Endothelial cell of umbilical vein (primary cell): ENCODE measurements at regions of chr14 and their contacts with region 1.

Region 1: GRCh38 chr14:22986508-22987054 is 4.2 kb upstream of the AJUBA start:
- DNase-seq: peak; percentile 86
- H3K4me3 ChIP-seq: no peak overlapping the region
- H3K27ac ChIP-seq: no peak overlapping the region
- H3K4me1 ChIP-seq: peaks cover 6% of the 10 kb centered on the region
- H3K27me3 ChIP-seq: no peaks in the 10 kb centered on the region
- CTCF ChIP-seq: peak; percentile 78 to 82
- POLR2A ChIP-seq: no peak

Region 2: GRCh38 chr14:22112004-22112403 is 874.6 kb before region 1 on chr14:
- CTCF ChIA-PET with region 1: no interaction called
- POLR2A ChIA-PET with region 1: no interaction called
- dilution Hi-C with region 1: no loop called
- intact Hi-C with region 1: no loop called
- DNase-seq: peak; percentile 25
- H3K4me3 ChIP-seq: no peak overlapping the region
- H3K27ac ChIP-seq: no peak overlapping the region
- H3K4me1 ChIP-seq: no peaks in the 10 kb centered on the region
- H3K27me3 ChIP-seq: peaks cover 5 to 19% of the 10 kb centered on the region in 2 experiments
- CTCF ChIP-seq: peak; percentile 48 to 64
- POLR2A ChIP-seq: no peak

Region 3: GRCh38 chr14:22491683-22492621 is 494.6 kb before region 1 on chr14:
- CTCF ChIA-PET with region 1: no interaction called
- POLR2A ChIA-PET with region 1: no interaction called
- dilution Hi-C with region 1: no loop called
- intact Hi-C with region 1: no loop called
- DNase-seq: no peak
- H3K4me3 ChIP-seq: no peak overlapping the region
- H3K27ac ChIP-seq: no peak overlapping the region
- H3K4me1 ChIP-seq: no peaks in the 10 kb centered on the region
- H3K27me3 ChIP-seq: peaks cover 35 to 66% of the 10 kb centered on the region in 2 experiments
- CTCF ChIP-seq: no peak
- POLR2A ChIP-seq: no peak

Region 4: DNA sequence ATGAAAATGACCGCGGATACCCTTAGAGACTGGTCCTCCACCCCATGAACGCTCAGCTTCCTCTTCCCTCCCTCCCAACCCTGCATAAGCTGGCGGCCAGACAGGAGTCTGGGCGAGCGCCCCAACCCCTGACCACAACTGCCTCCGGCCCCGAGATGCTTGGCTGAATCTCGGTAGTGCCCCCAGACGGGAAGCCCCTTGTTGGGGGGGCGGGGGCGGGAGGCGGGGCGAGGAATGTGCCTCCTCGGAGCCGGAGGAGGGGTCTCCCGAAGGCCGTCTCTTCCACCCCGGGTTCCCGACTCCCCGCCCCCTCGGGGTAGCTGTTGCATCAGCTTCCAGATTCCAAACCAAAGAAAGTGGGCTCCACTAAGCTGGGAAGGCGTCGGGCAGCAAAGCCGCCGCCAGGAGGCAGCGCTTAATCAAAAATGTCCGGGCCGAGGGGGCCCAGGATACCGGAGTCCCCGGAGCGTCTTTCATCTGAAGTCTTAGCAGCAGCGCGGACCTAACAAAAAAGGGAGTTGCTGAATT is 163.9 kb before region 1 on chr14:
- CTCF ChIA-PET with region 1: interaction called, 12 read pairs
- POLR2A ChIA-PET with region 1: interaction called, 3 read pairs
- dilution Hi-C with region 1: no loop called
- intact Hi-C with region 1: loop called (anchors 1 kb)
- DNase-seq: peak; percentile 91
- H3K4me3 ChIP-seq: peak overlapping the region; percentile 14 to 57 (median 32)
- H3K27ac ChIP-seq: peak overlapping the region; percentile 68
- H3K4me1 ChIP-seq: peaks cover 47% of the 10 kb centered on the region
- H3K27me3 ChIP-seq: no peaks in the 10 kb centered on the region
- CTCF ChIP-seq: peak; percentile 86 to 88
- POLR2A ChIP-seq: no peak

Region 5: DNA sequence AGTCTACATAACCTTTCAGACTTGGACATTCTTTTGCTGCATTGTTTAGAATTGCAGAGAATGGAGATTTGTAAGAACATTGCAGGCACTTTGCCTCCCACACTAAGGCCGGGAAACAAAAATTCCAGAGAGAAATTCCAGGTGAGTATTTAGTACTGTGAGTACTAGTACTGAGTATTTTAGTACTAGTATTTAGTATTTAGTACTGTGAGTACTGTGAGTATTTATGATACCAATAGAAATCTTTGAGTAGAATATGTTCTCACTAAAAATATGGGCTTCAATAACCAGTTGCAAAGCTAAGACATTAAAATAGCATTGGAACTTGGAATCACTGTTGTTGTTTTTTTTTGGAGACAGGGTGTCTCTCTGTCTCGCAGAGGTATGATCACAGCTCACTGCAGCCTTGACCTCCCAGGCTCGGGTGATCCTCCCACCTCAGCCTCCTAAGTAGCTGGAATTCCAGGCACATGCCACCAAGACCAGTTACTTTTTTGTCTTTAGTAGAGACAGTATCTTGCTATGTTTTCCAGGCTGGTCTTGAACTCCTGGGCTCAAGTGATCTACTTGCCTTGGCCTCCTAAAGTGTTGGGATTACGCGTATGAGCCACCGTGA is 24.4 kb before region 1 on chr14:
- CTCF ChIA-PET with region 1: interaction called, 20 read pairs
- POLR2A ChIA-PET with region 1: interaction called, 3 read pairs
- dilution Hi-C with region 1: no loop called
- intact Hi-C with region 1: no loop called
- DNase-seq: no peak
- H3K4me3 ChIP-seq: no peak overlapping the region
- H3K27ac ChIP-seq: no peak overlapping the region
- H3K4me1 ChIP-seq: peaks cover 3% of the 10 kb centered on the region
- H3K27me3 ChIP-seq: no peaks in the 10 kb centered on the region
- CTCF ChIP-seq: no peak
- POLR2A ChIP-seq: no peak

Region 6: GRCh38 chr14:23015618-23016017 is 29.0 kb after region 1 on chr14:
- CTCF ChIA-PET with region 1: interaction called, 17 read pairs
- POLR2A ChIA-PET with region 1: no interaction called
- dilution Hi-C with region 1: no loop called
- intact Hi-C with region 1: no loop called
- DNase-seq: no peak
- H3K4me3 ChIP-seq: no peak overlapping the region
- H3K27ac ChIP-seq: no peak overlapping the region
- H3K4me1 ChIP-seq: no peaks in the 10 kb centered on the region
- H3K27me3 ChIP-seq: no peaks in the 10 kb centered on the region
- CTCF ChIP-seq: no peak
- POLR2A ChIP-seq: no peak

Region 7: DNA sequence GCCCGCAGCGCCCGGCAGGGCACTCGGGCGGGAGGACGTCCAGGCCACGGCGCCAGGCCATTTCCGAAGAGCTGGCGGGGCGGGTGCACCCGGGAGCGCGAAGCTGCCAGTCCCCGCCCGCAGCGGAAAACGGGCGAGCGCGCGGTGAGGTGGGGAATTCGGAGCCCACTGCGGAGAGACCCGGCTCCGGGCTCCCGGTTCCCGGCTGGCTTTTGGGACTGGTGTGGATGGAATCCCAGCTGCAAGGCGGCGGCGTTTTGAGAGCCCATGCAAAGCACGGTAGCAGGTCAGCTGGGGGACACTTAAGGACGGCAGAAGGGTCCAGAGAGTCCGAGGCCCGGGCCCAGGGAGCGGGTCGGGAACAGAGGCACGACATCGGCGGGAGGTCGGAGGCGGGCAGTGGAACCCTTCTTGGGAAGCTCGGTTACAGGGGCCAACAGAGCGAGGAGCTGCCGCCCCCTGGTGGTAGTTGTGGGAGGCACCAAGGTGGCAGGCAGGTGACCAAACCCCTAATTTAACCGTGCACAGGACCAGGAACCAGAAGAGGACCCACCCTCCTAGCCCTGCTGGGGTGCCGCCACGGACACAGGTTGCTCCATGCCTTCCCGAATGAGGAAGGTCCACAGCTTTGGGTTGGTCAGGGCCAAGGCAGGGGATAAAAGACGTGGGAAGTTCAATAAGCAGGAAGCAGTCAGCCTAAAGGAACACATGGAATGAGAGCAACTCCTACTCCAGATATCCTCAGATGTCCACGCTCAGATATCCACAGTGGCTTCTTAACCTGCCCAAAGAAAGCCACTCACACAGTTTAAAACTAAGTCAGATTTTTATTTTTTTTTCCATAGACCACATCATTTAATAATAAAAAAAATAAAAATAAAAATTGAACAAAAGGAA is 71.4 kb after region 1 on chr14:
- CTCF ChIA-PET with region 1: interaction called, 1,071 read pairs
- POLR2A ChIA-PET with region 1: interaction called, 13 read pairs
- dilution Hi-C with region 1: loop called (anchors 10 kb)
- intact Hi-C with region 1: loop called (anchors 1 kb)
- DNase-seq: peak; percentile 87
- H3K4me3 ChIP-seq: peak overlapping the region; percentile 28 to 62 (median 49)
- H3K27ac ChIP-seq: peak overlapping the region; percentile 48
- H3K4me1 ChIP-seq: peaks cover 31% of the 10 kb centered on the region
- H3K27me3 ChIP-seq: no peaks in the 10 kb centered on the region
- CTCF ChIP-seq: peak; percentile 97
- POLR2A ChIP-seq: peak; percentile 33

Region 8: DNA sequence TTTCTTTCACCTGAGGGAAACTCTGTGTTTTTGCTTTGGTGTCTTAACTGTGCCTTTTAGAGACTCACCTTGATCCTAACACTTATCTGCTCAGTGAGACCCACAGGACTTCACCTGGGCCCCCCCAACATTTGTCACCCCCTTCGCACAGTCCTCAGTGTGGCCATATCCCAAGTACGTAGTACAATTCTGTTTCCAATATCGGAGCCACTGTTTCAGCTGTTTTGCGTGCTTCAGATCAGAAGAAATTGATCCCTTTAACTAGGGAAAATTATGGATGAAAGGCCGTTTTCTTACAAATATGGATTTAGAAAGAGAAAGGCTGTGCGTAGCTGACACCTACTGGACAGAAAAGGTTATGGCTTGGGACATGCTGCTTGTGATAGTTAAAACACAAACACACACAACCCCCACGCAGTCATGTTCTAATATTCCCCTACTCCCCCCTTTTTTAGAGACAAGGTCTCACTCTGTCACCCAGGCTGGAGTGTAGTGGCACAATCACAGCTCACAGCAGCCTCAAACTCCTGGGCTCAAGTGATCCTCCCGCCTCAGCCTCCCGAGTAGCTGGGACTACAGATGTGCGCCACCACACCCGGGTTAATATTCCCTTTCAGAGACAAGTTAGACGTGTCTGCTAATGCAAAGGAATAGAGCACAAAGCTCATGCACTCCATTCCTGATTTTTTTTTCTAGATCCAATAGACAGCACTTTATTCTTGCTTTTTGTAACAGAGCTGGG is 200.5 kb after region 1 on chr14:
- CTCF ChIA-PET with region 1: interaction called, 3 read pairs
- POLR2A ChIA-PET with region 1: no interaction called
- dilution Hi-C with region 1: no loop called
- intact Hi-C with region 1: loop called (anchors 10 kb)
- DNase-seq: peak; percentile 81
- H3K4me3 ChIP-seq: no peak overlapping the region
- H3K27ac ChIP-seq: no peak overlapping the region
- H3K4me1 ChIP-seq: peaks cover 22% of the 10 kb centered on the region
- H3K27me3 ChIP-seq: peaks cover under 1 to 5% of the 10 kb centered on the region in 2 experiments
- CTCF ChIP-seq: peak; percentile 61 to 73
- POLR2A ChIP-seq: no peak